ENCODE measurements at regions of chr12 and their contacts with region 1.

Region 1: GRCh38 chr12:120292661-120293531 is at the start of gene RNU4-1:
- DNase-seq: peak; percentile 49 to 88 (median 71)
- ATAC-seq: peak; percentile 38 to 53 (median 52)
- H3K4me3 ChIP-seq: peak within 1 kb of the TSS; percentile 72 to 95
- H3K4me3 Mint-ChIP-seq: no peak within 1 kb of the TSS
- H3K27ac ChIP-seq: peak within 1 kb of the TSS; percentile 100
- H3K27ac Mint-ChIP-seq: no peak within 1 kb of the TSS
- H3K4me1 ChIP-seq: peaks cover 2 to 24% of the 10 kb centered on the region in 2 experiments
- H3K4me1 Mint-ChIP-seq: peaks cover 0 to 11% (median 9%) of the 10 kb centered on the region in 3 donors
- H3K27me3 ChIP-seq: peaks cover 0 to 3% of the 10 kb centered on the region in 2 experiments
- H3K27me3 Mint-ChIP-seq: no peaks in the 10 kb centered on the region
- total RNA-seq, gene RNU4-1: 1,482 to 2,823 (median 1,909) TPM

Region 2: DNA sequence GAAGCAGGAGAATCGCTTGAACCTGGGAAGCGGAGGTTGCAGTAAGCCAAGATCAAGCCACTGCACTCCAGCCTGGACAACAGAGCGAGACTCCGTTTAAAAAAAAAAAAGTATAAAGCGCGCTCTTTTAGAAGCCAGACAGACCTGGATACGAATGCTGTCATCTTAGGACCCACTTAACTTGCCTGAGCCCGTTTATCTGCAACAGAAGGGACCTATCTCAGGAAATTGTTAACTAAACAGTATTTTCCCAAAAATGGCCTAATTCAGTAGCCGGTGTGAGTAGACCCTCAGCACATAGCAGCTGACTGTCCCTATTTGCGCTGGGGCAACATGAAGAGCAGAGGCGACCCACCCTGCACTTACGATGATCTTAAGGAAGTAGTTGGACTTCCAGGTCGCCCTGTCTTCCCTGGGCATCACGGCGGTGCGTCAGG is 92.5 kb before region 1 on chr12:
- CTCF ChIA-PET with region 1: interaction called, 3 to 6 read pairs
- POLR2A ChIA-PET with region 1: interaction called, 18 to 110 read pairs
- DNase-seq: no peak
- ATAC-seq: no peak
- H3K4me3 ChIP-seq: peak overlapping the region; percentile 66 to 92
- H3K4me3 Mint-ChIP-seq: peak overlapping the region; percentile 94 to 97 (median 96)
- H3K27ac ChIP-seq: peak overlapping the region; percentile 59
- H3K27ac Mint-ChIP-seq: peak overlapping the region; percentile 99
- H3K4me1 ChIP-seq: peaks cover 11 to 37% of the 10 kb centered on the region in 2 experiments
- H3K4me1 Mint-ChIP-seq: peaks cover 36 to 46% (median 43%) of the 10 kb centered on the region in 3 donors
- H3K27me3 ChIP-seq: no peaks in the 10 kb centered on the region
- H3K27me3 Mint-ChIP-seq: no peaks in the 10 kb centered on the region

Region 3: GRCh38 chr12:120249875-120250795 is 42.8 kb before region 1 on chr12:
- CTCF ChIA-PET with region 1: interaction called in 1 of 2 experiments, 7 read pairs
- POLR2A ChIA-PET with region 1: interaction called, 3 to 30 read pairs
- DNase-seq: peak in 17 of 35 experiments; percentile 25 to 66 (median 40)
- ATAC-seq: peak in 1 of 4 experiments; percentile 13
- H3K4me3 ChIP-seq: peak overlapping the region; percentile 26 to 30
- H3K4me3 Mint-ChIP-seq: peak overlapping the region; percentile 62 to 64 (median 63)
- H3K27ac ChIP-seq: peak overlapping the region; percentile 75
- H3K27ac Mint-ChIP-seq: peak overlapping the region; percentile 88
- H3K4me1 ChIP-seq: peaks cover 53 to 85% of the 10 kb centered on the region in 2 experiments
- H3K4me1 Mint-ChIP-seq: peaks cover 83 to 86% (median 83%) of the 10 kb centered on the region in 3 donors
- H3K27me3 ChIP-seq: no peaks in the 10 kb centered on the region
- H3K27me3 Mint-ChIP-seq: no peaks in the 10 kb centered on the region

Region 4: GRCh38 chr12:120317224-120318105 is 24.6 kb after region 1 on chr12:
- CTCF ChIA-PET with region 1: interaction called in 1 of 2 experiments, 5 read pairs
- POLR2A ChIA-PET with region 1: interaction called, 3 to 23 read pairs
- DNase-seq: peak; percentile 98 to 100 (median 100)
- ATAC-seq: peak; percentile 99 to 100 (median 99)
- H3K4me3 ChIP-seq: peak overlapping the region; percentile 66 to 82
- H3K4me3 Mint-ChIP-seq: peak overlapping the region; percentile 90 to 92 (median 90)
- H3K27ac ChIP-seq: peak overlapping the region; percentile 83
- H3K27ac Mint-ChIP-seq: peak overlapping the region; percentile 95 to 96
- H3K4me1 ChIP-seq: peaks cover 7 to 14% of the 10 kb centered on the region in 2 experiments
- H3K4me1 Mint-ChIP-seq: peaks cover 10 to 14% (median 13%) of the 10 kb centered on the region in 3 donors
- H3K27me3 ChIP-seq: no peaks in the 10 kb centered on the region
- H3K27me3 Mint-ChIP-seq: no peaks in the 10 kb centered on the region

Region 5: GRCh38 chr12:121614872-121615467 is 1322.1 kb after region 1 on chr12:
- CTCF ChIA-PET with region 1: interaction called in 1 of 2 experiments, 10 read pairs
- POLR2A ChIA-PET with region 1: no interaction called
- DNase-seq: peak in 5 of 35 experiments; percentile 13 to 37 (median 21)
- ATAC-seq: peak in 1 of 4 experiments; percentile 36
- H3K4me3 ChIP-seq: no peak overlapping the region
- H3K4me3 Mint-ChIP-seq: no peak overlapping the region
- H3K27ac ChIP-seq: no peak overlapping the region
- H3K27ac Mint-ChIP-seq: no peak overlapping the region
- H3K4me1 ChIP-seq: peaks cover 0 to 15% of the 10 kb centered on the region in 2 experiments
- H3K4me1 Mint-ChIP-seq: peaks cover 6 to 12% (median 8%) of the 10 kb centered on the region in 3 donors
- H3K27me3 ChIP-seq: no peaks in the 10 kb centered on the region
- H3K27me3 Mint-ChIP-seq: no peaks in the 10 kb centered on the region